Cardiac septum (tissue), 1 donor: ENCODE measurements at regions of chr9 and their contacts with region 1.

Region 1: DNA sequence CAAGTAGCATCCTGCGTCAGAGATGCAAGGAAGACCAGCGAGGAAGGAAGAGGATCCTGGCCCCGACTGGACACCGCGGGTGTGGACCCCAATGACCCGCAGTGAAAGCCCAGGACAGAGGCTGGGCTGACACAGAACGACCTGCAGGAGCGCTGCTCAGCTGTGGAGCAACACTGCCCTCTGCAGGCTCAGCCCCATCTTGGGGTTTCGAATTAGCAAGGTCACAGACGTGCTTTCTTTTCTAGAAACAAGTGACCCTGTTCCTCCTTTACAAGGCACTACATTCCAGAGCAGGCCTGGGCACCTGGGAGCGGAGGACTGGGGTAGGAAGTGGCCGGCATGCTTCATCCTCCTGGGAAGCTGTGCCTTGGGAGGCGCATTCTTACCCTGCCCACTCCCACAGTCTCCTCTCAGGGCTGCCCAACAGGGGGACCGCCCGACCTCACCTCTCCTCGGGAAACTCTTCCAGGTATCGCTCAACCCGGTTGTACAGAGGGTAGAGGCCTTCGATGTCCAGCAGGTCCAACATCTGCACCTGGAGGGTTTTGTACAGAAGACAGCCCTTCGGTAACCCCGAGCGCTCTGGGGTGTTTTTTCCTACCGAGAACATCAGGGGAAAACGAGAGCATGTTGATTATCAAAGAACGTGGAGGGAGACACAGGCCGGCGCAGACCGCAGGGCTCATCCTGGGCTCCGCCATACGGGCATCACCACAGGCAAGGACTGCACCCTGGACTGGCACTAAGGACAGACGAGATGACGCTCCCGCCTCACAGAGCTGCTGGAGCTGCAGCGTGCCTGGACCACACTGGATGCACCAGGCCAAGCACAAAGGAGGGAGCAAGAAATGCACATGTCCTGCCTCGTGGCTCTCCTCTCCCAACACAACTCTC is 35.0 kb downstream of the IPPK start:
- DNase-seq: peak; percentile 89

Region 2: DNA sequence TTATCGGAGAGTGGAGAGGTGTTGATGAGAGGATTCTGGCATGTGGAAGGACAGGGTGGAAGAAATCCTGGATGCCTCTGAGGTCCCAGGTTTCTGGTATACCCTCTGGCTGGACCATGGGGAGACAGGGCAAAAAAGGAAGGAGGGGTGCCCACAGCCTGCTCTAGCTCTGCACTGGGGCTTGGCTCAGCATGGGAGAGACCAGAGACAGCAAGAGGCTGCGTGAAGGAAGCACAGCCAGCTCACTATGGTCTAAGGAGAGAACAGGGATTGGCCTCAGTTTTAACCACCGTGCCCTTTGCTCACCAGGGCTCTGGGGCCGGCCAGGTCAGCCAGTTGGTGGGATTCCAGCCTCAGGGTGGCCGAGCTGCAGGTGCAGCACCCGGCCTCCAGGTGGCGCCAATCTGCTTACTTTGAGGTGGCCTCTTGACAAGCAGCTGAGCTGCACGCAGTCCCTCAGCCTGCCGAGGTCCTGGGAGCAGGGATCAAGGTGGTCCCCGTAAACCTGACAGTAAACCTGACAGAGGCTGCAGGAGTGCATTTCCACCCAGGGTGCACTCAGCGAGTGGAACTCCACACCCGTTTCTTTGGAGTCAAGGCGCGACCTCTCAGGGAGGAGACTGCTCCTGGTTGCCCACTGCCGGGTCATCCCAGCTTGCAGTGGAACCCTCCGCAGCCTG is 494.7 kb before region 1 on chr9:
- intact Hi-C with region 1: loop called (anchors 5 kb)
- DNase-seq: peak; percentile 91

Region 3: GRCh38 chr9:92325269-92325990 is 309.5 kb before region 1 on chr9 and contains the starts of genes CENPP and NOL8:
- intact Hi-C with region 1: loop called (anchors 5 kb)
- DNase-seq: peak; percentile 92
- total RNA-seq, gene CENPP: 3.5 TPM
- total RNA-seq, gene NOL8: 15.6 TPM

Region 4: GRCh38 chr9:92342825-92343488 is 292.0 kb before region 1 on chr9:
- intact Hi-C with region 1: loop called (anchors 5 kb)
- DNase-seq: no peak

Region 5: GRCh38 chr9:92686954-92687353 is 52.0 kb after region 1 on chr9:
- intact Hi-C with region 1: no loop called
- DNase-seq: no peak